ENCODE measurements at regions of chr2 and their contacts with region 1.

Region 1: DNA sequence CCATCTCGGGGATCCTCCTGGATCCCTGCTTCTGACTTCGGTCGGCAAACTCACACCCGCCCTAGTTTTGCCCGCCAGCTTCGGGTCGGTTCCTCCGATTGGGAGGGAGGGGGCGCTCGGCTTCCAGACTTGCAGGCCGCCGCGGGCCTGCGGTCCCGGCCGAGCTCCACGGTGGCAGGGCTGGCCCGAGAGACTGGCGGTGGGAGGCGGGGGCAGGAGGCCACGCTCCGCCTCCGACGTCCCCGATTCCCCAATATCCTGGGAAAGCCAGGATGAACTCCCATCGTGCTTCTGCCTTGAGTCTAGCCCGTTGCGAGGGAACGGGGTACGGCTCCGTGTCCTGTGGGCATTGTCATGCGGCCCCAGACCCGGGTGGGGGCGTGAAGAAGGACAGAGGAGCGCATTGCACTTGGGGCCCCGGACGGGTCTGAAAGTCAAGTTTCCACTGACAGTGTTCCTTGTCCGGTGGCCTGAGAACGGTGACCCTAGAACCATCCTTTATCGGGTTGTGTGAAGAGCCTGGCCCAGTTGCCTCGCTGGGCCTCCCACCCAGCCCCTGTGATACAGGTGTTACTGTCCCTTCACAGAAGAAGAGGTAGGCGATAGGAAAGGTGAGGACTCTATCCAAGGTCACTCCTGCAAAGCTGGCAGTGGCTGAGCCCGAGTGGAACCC is 2.4 kb upstream of the INHBB start:
- DNase-seq: peak; percentile 81 to 91
- H3K4me3 ChIP-seq: peak overlapping the region; percentile 55 to 95 (median 75)
- H3K27ac ChIP-seq: peak overlapping the region; percentile 83 to 95
- H3K4me1 ChIP-seq: peaks cover 0 to 8% of the 10 kb centered on the region in 2 donors
- H3K27me3 ChIP-seq: peaks cover 0 to 5% of the 10 kb centered on the region in 2 donors
- CTCF ChIP-seq: peak; percentile 72 to 87 (median 84)
- POLR2A ChIP-seq: no peak

Region 2: DNA sequence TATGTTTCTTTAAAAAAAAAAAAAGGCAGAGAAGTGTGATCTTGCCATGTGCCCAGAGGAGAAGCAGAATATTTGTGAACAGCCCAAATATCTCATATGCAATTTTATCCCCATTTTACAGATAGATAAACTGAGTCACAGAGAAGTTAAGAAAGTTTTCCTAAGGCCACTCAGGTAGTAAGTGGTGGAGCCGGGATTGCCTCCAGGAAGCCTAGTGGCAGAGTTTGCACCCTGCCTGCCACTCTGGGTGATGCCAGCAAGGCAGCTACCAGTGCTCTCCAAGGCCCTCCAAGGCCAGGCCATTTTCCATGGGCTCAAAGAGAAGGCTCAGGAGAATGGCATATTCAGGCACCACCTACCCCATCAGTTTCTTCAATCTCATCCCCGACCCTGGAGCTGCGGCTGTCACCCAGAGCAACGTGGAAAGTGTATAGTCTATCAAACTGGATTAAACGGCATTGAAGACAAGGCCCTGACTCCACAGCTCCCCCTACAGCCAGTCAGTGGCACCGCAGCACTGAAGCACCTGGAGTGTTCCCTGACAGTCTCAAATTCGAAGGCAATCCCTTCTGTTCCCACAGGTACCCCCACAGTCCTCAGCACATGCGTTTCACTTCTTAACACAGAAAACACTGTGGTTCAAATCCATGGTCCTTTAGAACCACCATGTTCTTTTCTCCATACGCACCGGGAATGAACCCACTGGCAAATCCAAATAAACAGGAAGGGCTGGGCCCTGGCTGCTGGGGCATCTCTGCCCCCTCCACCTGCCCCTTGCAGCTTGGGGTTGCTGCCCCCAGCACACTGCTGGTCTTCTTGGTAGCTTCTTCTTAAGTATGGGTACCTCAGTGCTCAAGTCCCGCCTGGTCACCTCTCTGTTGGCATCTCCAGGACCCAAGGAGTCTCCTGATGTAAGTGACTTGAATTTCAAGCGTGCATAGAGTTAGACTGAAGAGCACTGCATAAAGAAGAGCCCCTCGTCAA is 177.7 kb after region 1 on chr2:
- intact Hi-C with region 1: loop called (anchors 10 kb)
- DNase-seq: peak; percentile 40 to 74
- H3K4me3 ChIP-seq: no peak overlapping the region
- H3K27ac ChIP-seq: no peak overlapping the region
- H3K4me1 ChIP-seq: no peaks in the 10 kb centered on the region
- H3K27me3 ChIP-seq: no peaks in the 10 kb centered on the region
- CTCF ChIP-seq: peak; percentile 36 to 80 (median 69)
- POLR2A ChIP-seq: no peak

Region 3: GRCh38 chr2:120670771-120671480 is 327.4 kb after region 1 on chr2:
- intact Hi-C with region 1: loop called (anchors 5 kb)
- DNase-seq: peak in 1 of 2 donors; percentile 51
- H3K4me3 ChIP-seq: peak overlapping the region in 1 of 3 donors; percentile 22
- H3K27ac ChIP-seq: peak overlapping the region; percentile 65 to 80
- H3K4me1 ChIP-seq: peaks cover 0 to 12% of the 10 kb centered on the region in 2 donors
- H3K27me3 ChIP-seq: no peaks in the 10 kb centered on the region
- CTCF ChIP-seq: peak in 1 of 3 donors; percentile 12
- POLR2A ChIP-seq: no peak

Measured in breast epithelium (tissue), 4 donors.